HCT116 (cell line): ENCODE measurements at regions of chr14 and their contacts with region 1.

Region 1: GRCh38 chr14:51157012-51157411 is 62.1 kb upstream of the TRIM9 start:
- DNase-seq: peak; percentile 16
- ATAC-seq: peak; percentile 87
- H3K4me3 ChIP-seq: no peak overlapping the region
- H3K27ac ChIP-seq: no peak overlapping the region
- H3K4me1 ChIP-seq: no peaks in the 10 kb centered on the region
- H3K27me3 ChIP-seq: no peaks in the 10 kb centered on the region
- CTCF ChIP-seq: peak; percentile 18 to 63 (median 54); a peak in 4 of 6 replicates
- POLR2A ChIP-seq: no peak
- RAD21 ChIP-seq: peak; percentile 48

Region 2: GRCh38 chr14:51167587-51168214 is 10.7 kb after region 1 on chr14:
- CTCF ChIA-PET with region 1: interaction called, 11 read pairs
- POLR2A ChIA-PET with region 1: no interaction called
- RAD21 ChIA-PET with region 1: no interaction called
- intact Hi-C with region 1: no loop called
- DNase-seq: no peak
- ATAC-seq: no peak
- H3K4me3 ChIP-seq: no peak overlapping the region
- H3K27ac ChIP-seq: no peak overlapping the region
- H3K4me1 ChIP-seq: peaks cover 0 to 4% of the 10 kb centered on the region in 2 experiments; a peak in 1 of 4 replicates
- H3K27me3 ChIP-seq: no peaks in the 10 kb centered on the region; the same call in 1 of the 2 replicates
- CTCF ChIP-seq: no peak
- POLR2A ChIP-seq: no peak
- RAD21 ChIP-seq: no peak

Region 3: DNA sequence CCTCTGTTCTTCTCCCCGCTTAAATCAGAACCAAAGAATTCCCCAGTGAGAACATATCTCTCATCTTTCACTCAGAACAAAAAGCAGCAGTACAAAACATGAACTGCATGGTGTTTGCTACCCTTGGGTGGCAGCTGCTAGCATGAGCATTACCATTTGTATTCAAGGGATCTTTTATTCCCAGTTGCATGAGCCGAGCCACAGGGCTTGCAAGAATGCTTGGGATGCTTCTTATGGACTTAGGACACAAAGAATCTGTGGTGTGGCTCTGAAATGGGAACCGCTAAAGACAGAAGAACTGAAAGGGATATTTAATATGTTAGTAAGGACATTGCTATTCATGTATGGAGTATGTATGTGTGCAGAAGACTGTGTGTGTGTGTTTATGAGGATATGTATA is 273.6 kb after region 1 on chr14:
- CTCF ChIA-PET with region 1: no interaction called
- POLR2A ChIA-PET with region 1: no interaction called
- RAD21 ChIA-PET with region 1: no interaction called
- intact Hi-C with region 1: no loop called
- DNase-seq: no peak
- ATAC-seq: no peak
- H3K4me3 ChIP-seq: no peak overlapping the region
- H3K27ac ChIP-seq: no peak overlapping the region
- H3K4me1 ChIP-seq: no peaks in the 10 kb centered on the region
- H3K27me3 ChIP-seq: no peaks in the 10 kb centered on the region
- CTCF ChIP-seq: no peak
- POLR2A ChIP-seq: no peak
- RAD21 ChIP-seq: no peak